CD8-positive, alpha-beta T cell (primary cell): ENCODE measurements at regions of chr7 and their contacts with region 1.

Region 1: DNA sequence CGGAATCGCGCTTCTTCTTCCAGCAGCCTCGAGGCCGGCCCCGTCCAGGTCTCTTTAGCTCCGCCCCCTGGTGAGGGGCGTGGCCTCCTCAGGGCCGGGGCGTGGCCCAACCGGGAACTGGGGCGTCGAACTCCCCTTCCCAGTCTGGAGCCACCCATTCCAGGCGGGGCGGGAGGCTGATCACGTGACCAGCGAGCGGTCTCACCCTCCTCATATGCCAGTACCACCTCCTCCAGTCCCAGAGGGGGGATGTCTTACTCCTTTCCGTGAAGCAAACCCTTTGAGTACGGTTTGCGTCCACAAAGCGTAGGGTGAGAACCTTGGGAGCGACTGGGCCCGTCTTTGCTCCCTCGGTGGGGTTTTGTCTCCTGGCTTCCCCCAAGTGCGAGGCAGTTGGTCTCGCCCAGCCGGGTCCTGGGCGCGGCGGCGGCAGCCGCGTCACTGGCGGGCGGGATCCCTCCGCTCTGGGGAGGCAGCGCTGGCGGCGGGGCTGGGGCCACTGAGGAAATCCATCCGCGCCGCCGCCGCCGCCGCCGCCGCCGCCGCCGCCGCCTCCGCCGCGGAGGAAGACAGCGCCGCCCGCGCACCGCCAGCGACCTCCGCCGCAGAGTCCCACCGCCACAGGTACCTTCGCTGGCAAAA is at the start of gene GNB2:
- DNase-seq: peak; percentile 90 to 98 (median 96)
- ATAC-seq: peak; percentile 53
- H3K4me3 ChIP-seq: peak within 1 kb of the TSS; percentile 89 to 99
- H3K4me3 Mint-ChIP-seq: peak within 1 kb of the TSS; percentile 91
- H3K27ac ChIP-seq: peak within 1 kb of the TSS; percentile 80 to 98
- H3K27ac Mint-ChIP-seq: peak within 1 kb of the TSS; percentile 93
- H3K4me1 ChIP-seq: peaks cover 13% of the 10 kb centered on the region
- H3K4me1 Mint-ChIP-seq: peaks cover 23% of the 10 kb centered on the region
- H3K27me3 ChIP-seq: no peaks in the 10 kb centered on the region
- H3K27me3 Mint-ChIP-seq: no peaks in the 10 kb centered on the region
- CTCF ChIP-seq: no peak
- total RNA-seq, gene GNB2: 69.4 to 69.6 TPM

Region 2: DNA sequence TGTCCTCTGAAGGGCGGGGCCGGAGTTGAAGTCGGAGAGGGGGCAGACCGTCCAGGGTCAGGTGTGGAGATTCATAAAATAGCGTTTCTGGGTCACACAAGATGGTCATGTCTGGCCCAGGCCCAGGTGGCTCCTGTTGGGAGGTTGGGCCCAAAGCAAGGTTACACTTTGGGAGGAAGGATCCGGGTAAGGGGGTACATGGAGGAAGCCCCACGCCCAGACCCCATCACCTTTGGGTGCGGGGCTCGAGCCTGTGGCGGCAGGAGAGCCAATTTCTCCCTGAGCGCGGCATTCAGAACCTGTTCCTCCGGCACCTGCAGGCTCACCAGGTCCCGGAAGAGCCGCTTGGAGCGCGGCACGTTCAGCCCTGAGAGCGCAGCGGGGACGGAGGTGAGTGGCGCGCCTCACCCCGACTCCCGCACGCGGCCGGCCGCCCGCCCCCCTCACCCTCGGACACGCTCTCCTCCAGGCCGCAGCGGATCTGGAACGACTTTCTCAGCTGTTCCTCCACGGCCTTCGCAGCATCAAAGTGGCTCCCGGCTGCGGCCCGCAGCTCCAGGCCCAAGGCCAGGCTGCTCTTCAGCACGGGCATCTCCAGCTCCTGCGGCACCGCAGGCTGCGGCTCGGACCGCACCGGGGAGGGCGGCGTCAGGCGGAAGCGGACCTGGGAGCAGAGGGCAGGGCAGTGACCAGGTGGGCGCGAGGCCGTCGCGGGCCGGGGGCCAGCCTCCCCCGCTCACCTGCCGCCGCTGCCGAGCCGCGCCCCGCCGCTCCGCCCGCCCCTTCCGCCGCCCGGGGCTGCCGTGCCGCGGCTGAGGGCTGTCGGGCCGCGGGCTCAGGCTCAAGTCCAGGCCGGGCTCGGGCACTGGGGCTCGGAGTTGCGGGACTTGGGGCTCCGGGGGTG is 237.8 kb before region 1 on chr7:
- CTCF ChIA-PET with region 1: no interaction called
- POLR2A ChIA-PET with region 1: no interaction called
- intact Hi-C with region 1: loop called in 1 of 2 experiments (anchors 1 kb)
- DNase-seq: peak in 8 of 9 experiments; percentile 35 to 76 (median 52)
- ATAC-seq: peak; percentile 32
- H3K4me3 ChIP-seq: peak overlapping the region; percentile 75 to 90
- H3K4me3 Mint-ChIP-seq: peak overlapping the region; percentile 94
- H3K27ac ChIP-seq: peak overlapping the region; percentile 90 to 96
- H3K27ac Mint-ChIP-seq: peak overlapping the region; percentile 97
- H3K4me1 ChIP-seq: peaks cover 38% of the 10 kb centered on the region
- H3K4me1 Mint-ChIP-seq: peaks cover 51% of the 10 kb centered on the region
- H3K27me3 ChIP-seq: no peaks in the 10 kb centered on the region
- H3K27me3 Mint-ChIP-seq: no peaks in the 10 kb centered on the region
- CTCF ChIP-seq: no peak

Region 3: GRCh38 chr7:100538654-100539435 is 134.6 kb before region 1 on chr7 and contains the start of gene AGFG2:
- CTCF ChIA-PET with region 1: no interaction called
- POLR2A ChIA-PET with region 1: no interaction called
- intact Hi-C with region 1: loop called in 1 of 2 experiments (anchors 1 kb)
- DNase-seq: peak; percentile 100
- ATAC-seq: peak; percentile 94
- H3K4me3 ChIP-seq: peak within 1 kb of the TSS; percentile 67 to 74
- H3K4me3 Mint-ChIP-seq: peak within 1 kb of the TSS; percentile 99
- H3K27ac ChIP-seq: peak within 1 kb of the TSS; percentile 48 to 61
- H3K27ac Mint-ChIP-seq: peak within 1 kb of the TSS; percentile 84
- H3K4me1 ChIP-seq: peaks cover 40% of the 10 kb centered on the region
- H3K4me1 Mint-ChIP-seq: peaks cover 49% of the 10 kb centered on the region
- H3K27me3 ChIP-seq: no peaks in the 10 kb centered on the region
- H3K27me3 Mint-ChIP-seq: no peaks in the 10 kb centered on the region
- CTCF ChIP-seq: no peak
- total RNA-seq, gene AGFG2: 4.4 to 6.3 TPM

Region 4: GRCh38 chr7:100604028-100604975 is 69.1 kb before region 1 on chr7:
- CTCF ChIA-PET with region 1: interaction called, 3 read pairs
- POLR2A ChIA-PET with region 1: no interaction called
- intact Hi-C with region 1: loop called in 1 of 2 experiments (anchors 1 kb)
- DNase-seq: peak; percentile 45 to 87 (median 77)
- ATAC-seq: peak; percentile 76
- H3K4me3 ChIP-seq: peak overlapping the region; percentile 62 to 79
- H3K4me3 Mint-ChIP-seq: peak overlapping the region; percentile 85
- H3K27ac ChIP-seq: peak overlapping the region; percentile 53 to 70
- H3K27ac Mint-ChIP-seq: peak overlapping the region; percentile 87
- H3K4me1 ChIP-seq: peaks cover 19% of the 10 kb centered on the region
- H3K4me1 Mint-ChIP-seq: peaks cover 22% of the 10 kb centered on the region
- H3K27me3 ChIP-seq: peaks cover 0 to 3% of the 10 kb centered on the region in 2 experiments
- H3K27me3 Mint-ChIP-seq: no peaks in the 10 kb centered on the region
- CTCF ChIP-seq: peak; percentile 50

Region 5: GRCh38 chr7:100626530-100627237 is 46.7 kb before region 1 on chr7:
- CTCF ChIA-PET with region 1: no interaction called
- POLR2A ChIA-PET with region 1: interaction called, 6 read pairs
- intact Hi-C with region 1: loop called (anchors 1 kb)
- DNase-seq: peak; percentile 82 to 94 (median 88)
- ATAC-seq: peak; percentile 99
- H3K4me3 ChIP-seq: peak overlapping the region; percentile 40 to 45
- H3K4me3 Mint-ChIP-seq: peak overlapping the region; percentile 70
- H3K27ac ChIP-seq: peak overlapping the region; percentile 56 to 78
- H3K27ac Mint-ChIP-seq: peak overlapping the region; percentile 80
- H3K4me1 ChIP-seq: peaks cover 14% of the 10 kb centered on the region
- H3K4me1 Mint-ChIP-seq: peaks cover 35% of the 10 kb centered on the region
- H3K27me3 ChIP-seq: no peaks in the 10 kb centered on the region
- H3K27me3 Mint-ChIP-seq: no peaks in the 10 kb centered on the region
- CTCF ChIP-seq: no peak

Region 6: DNA sequence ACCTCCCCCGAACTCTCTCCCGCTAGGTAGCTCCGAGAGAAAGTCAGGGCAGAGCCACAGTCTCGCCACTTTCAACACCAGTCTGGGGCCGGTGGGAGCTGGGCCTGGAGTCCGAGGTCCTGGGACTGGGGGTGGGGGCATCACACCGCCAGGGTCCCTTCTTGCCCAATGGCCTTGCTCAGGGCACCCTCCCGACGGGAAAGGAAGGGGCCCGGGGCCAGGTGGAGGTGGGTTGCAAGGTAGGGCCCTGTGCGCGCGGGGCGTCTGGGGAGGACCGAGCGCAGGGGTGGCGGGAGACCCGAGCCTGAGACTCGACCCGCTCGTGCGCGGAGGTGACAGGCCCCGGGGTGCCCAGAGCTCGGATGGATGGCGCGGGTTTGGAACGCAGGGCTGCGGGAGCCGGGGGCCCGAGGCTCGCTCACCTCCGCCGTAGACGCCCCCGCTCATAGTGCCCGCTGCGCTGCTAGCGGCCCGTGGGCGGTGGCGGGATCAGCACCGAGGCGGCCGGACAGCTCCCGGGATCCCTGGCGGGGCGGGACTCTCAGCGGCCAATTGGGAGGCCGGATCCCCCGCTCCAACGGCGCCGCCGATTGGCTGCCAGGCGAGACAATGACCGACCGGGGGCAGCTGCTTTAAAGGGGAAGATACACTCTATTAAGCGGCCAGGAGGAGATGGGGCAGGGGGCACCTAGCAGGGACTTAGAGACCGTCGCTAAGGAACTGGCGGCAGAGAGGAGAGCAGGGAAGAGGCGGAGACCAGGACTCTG is 17.3 kb before region 1 on chr7 and contains the start of gene ACTL6B:
- CTCF ChIA-PET with region 1: no interaction called
- POLR2A ChIA-PET with region 1: no interaction called
- intact Hi-C with region 1: loop called in 1 of 2 experiments (anchors 2 kb)
- DNase-seq: peak in 7 of 9 experiments; percentile 38 to 62 (median 57)
- ATAC-seq: peak; percentile 83
- H3K4me3 ChIP-seq: no peak within 1 kb of the TSS
- H3K4me3 Mint-ChIP-seq: no peak within 1 kb of the TSS
- H3K27ac ChIP-seq: no peak within 1 kb of the TSS
- H3K27ac Mint-ChIP-seq: no peak within 1 kb of the TSS
- H3K4me1 ChIP-seq: peaks cover 8% of the 10 kb centered on the region
- H3K4me1 Mint-ChIP-seq: no peaks in the 10 kb centered on the region
- H3K27me3 ChIP-seq: peaks cover 24 to 40% of the 10 kb centered on the region in 2 experiments
- H3K27me3 Mint-ChIP-seq: peaks cover 34% of the 10 kb centered on the region
- CTCF ChIP-seq: no peak
- total RNA-seq, gene ACTL6B: not detected

Region 7: GRCh38 chr7:100887516-100888290 is 214.3 kb after region 1 on chr7:
- CTCF ChIA-PET with region 1: no interaction called
- POLR2A ChIA-PET with region 1: no interaction called
- intact Hi-C with region 1: no loop called
- DNase-seq: peak in 8 of 9 experiments; percentile 48 to 82 (median 70)
- ATAC-seq: peak; percentile 33
- H3K4me3 ChIP-seq: peak overlapping the region; percentile 18 to 29
- H3K4me3 Mint-ChIP-seq: peak overlapping the region; percentile 87
- H3K27ac ChIP-seq: peak overlapping the region; percentile 55 to 87
- H3K27ac Mint-ChIP-seq: peak overlapping the region; percentile 98
- H3K4me1 ChIP-seq: peaks cover 40% of the 10 kb centered on the region
- H3K4me1 Mint-ChIP-seq: peaks cover 54% of the 10 kb centered on the region
- H3K27me3 ChIP-seq: peaks cover 0 to 12% of the 10 kb centered on the region in 2 experiments
- H3K27me3 Mint-ChIP-seq: peaks cover 7% of the 10 kb centered on the region
- CTCF ChIP-seq: no peak